CD4-positive, alpha-beta T cell (primary cell): ENCODE measurements at regions of chr6 and their contacts with region 1.

Region 1: DNA sequence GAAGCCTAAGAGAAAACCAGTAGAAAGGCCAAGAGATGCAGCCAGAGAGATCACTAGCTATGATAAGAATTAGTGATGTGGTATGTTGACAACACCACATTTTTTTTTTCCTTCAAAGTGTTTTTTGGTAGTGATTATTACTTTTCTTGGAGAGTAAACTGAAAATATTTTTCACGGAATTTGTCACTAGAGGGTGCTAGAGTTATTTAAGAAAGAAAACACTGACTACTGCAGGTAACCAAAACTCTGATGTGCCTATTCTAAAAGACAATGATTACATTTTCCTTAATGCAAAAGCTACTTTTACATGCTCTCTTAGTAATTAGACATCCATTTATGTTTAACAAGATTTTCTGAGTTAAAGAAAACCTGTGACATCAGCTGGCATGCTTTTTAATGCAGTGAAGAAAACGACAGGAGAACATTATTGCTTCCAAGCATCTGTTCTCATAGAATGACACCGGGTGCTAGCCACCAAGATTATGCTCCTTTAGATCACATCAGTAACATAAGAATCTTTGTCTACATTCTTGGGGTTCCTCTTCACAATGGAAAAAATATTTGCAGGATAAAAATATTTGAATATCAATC is 28.8 kb downstream of the RWDD2A start:
- DNase-seq: peak in 3 of 14 experiments; percentile 43 to 45 (median 45)
- ATAC-seq: no peak
- H3K4me3 ChIP-seq: no peak overlapping the region
- H3K4me3 Mint-ChIP-seq: no peak overlapping the region
- H3K27ac ChIP-seq: no peak overlapping the region
- H3K27ac Mint-ChIP-seq: no peak overlapping the region
- H3K4me1 ChIP-seq: no peaks in the 10 kb centered on the region
- H3K4me1 Mint-ChIP-seq: no peaks in the 10 kb centered on the region
- H3K27me3 ChIP-seq: no peaks in the 10 kb centered on the region
- H3K27me3 Mint-ChIP-seq: no peaks in the 10 kb centered on the region
- CTCF ChIP-seq: peak; percentile 65

Region 2: GRCh38 chr6:83192871-83193746 is 28.9 kb before region 1 on chr6 and contains the starts of genes PGM3 and RWDD2A:
- CTCF ChIA-PET with region 1: no interaction called
- POLR2A ChIA-PET with region 1: no interaction called
- intact Hi-C with region 1: no loop called
- DNase-seq: peak; percentile 81 to 96 (median 89)
- ATAC-seq: peak; percentile 97
- H3K4me3 ChIP-seq: peak within 1 kb of the TSS; percentile 88
- H3K4me3 Mint-ChIP-seq: peak within 1 kb of the TSS; percentile 97
- H3K27ac ChIP-seq: peak within 1 kb of the TSS in 1 of 2 donors; percentile 70
- H3K27ac Mint-ChIP-seq: peak within 1 kb of the TSS; percentile 94
- H3K4me1 ChIP-seq: peaks cover 17% of the 10 kb centered on the region
- H3K4me1 Mint-ChIP-seq: peaks cover 54% of the 10 kb centered on the region
- H3K27me3 ChIP-seq: no peaks in the 10 kb centered on the region
- H3K27me3 Mint-ChIP-seq: no peaks in the 10 kb centered on the region
- CTCF ChIP-seq: no peak
- total RNA-seq, gene PGM3: 22.6 to 25.3 TPM
- total RNA-seq, gene RWDD2A: 2.8 to 3.0 TPM

Region 3: GRCh38 chr6:83442752-83443151 is 220.8 kb after region 1 on chr6:
- CTCF ChIA-PET with region 1: no interaction called
- POLR2A ChIA-PET with region 1: no interaction called
- intact Hi-C with region 1: no loop called
- DNase-seq: peak in 1 of 14 experiments; percentile 6
- ATAC-seq: no peak
- H3K4me3 ChIP-seq: no peak overlapping the region
- H3K4me3 Mint-ChIP-seq: no peak overlapping the region
- H3K27ac ChIP-seq: no peak overlapping the region
- H3K27ac Mint-ChIP-seq: no peak overlapping the region
- H3K4me1 ChIP-seq: no peaks in the 10 kb centered on the region
- H3K4me1 Mint-ChIP-seq: no peaks in the 10 kb centered on the region
- H3K27me3 ChIP-seq: no peaks in the 10 kb centered on the region
- H3K27me3 Mint-ChIP-seq: peaks cover 6% of the 10 kb centered on the region
- CTCF ChIP-seq: no peak

Region 4: DNA sequence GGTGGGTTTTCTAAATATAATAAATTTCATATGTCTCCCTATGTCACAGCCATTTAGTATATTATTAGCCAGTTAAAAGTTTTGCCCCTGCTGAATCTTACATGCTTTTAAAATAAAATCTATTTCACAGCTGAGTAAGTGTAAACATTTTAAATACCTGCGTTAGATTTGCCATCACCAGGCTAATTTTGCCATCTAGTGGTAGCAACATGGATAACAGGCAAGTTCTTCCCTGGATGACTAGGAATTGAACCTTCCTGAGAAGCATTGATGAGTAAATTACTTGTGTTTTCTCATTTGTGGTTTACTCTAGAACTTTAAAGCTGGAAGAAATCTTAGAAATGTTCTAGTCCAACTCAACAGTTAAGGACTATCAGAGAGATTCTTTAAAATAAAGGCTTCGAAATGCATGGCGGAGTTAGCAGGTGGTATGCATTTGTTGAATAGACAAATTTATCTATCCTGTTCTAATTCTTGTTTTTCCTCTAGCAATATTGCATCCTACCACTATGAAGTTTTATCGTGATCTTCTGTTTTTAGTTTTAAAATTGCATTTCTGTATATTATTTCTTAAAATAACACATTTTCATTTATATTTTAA is 293.0 kb after region 1 on chr6:
- CTCF ChIA-PET with region 1: no interaction called
- POLR2A ChIA-PET with region 1: no interaction called
- intact Hi-C with region 1: loop called (anchors 2 to 5 kb)
- DNase-seq: peak in 3 of 14 experiments; percentile 41 to 58 (median 54)
- ATAC-seq: no peak
- H3K4me3 ChIP-seq: no peak overlapping the region
- H3K4me3 Mint-ChIP-seq: no peak overlapping the region
- H3K27ac ChIP-seq: no peak overlapping the region
- H3K27ac Mint-ChIP-seq: no peak overlapping the region
- H3K4me1 ChIP-seq: peaks cover 4% of the 10 kb centered on the region
- H3K4me1 Mint-ChIP-seq: peaks cover 6% of the 10 kb centered on the region
- H3K27me3 ChIP-seq: peaks cover 10 to 26% of the 10 kb centered on the region in 2 experiments
- H3K27me3 Mint-ChIP-seq: peaks cover 64% of the 10 kb centered on the region
- CTCF ChIP-seq: peak; percentile 66